Motor neuron (in vitro differentiated cells): ENCODE measurements at regions of chr5 and their contacts with region 1.

Region 1: DNA sequence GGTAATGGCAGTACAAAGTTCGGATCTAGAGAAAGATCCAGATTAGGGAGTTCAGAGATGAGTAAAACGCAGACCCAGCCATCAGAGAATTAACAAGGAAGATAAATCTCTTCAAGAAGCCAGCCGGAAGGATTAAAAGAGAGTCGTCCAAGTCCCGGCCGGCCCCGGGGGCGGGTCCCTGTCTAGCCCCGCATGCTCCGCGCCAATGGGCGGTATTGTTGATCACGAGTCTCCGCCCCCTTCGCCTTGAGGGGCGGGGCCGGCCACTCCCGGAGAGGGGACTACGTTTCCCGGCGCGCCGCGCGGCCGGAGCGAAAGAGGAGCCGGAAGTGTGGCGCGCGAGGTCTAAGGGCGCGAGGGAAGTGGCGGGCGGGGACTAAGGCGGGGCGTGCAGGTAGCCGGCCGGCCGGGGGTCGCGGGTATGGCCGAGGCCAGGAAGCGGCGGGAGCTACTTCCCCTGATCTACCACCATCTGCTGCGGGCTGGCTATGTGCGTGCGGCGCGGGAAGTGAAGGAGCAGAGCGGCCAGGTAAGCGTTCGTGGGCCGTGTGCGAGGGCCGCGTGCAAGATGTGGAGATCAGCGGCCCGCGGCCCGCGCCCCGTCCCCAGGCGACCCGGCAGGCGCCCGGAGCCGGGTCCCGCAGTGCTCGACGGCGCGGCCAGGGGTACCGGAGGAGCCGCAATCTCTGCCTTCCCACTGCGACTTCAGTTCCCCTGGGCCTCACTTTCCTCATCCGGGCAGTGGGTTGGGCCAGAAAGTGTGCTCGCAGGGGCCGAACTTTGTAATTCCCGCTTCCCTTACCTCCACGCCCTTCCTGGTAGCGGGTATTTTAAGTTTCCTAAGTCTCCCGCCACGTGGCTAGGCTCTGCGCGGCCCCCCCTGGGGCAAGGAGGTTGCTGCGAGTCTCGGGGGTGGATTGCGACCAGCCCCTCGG is at the start of gene TCOF1:
- ATAC-seq: peak; percentile 94 to 99 (median 98)
- H3K4me3 ChIP-seq: peak within 1 kb of the TSS; percentile 51 to 76 (median 75)
- H3K27ac ChIP-seq: no peak within 1 kb of the TSS
- H3K4me1 ChIP-seq: peaks cover 12 to 13% of the 10 kb centered on the region in 2 donors
- total RNA-seq, gene TCOF1: 10.9 to 51.4 (median 17.9) TPM

Region 2: DNA sequence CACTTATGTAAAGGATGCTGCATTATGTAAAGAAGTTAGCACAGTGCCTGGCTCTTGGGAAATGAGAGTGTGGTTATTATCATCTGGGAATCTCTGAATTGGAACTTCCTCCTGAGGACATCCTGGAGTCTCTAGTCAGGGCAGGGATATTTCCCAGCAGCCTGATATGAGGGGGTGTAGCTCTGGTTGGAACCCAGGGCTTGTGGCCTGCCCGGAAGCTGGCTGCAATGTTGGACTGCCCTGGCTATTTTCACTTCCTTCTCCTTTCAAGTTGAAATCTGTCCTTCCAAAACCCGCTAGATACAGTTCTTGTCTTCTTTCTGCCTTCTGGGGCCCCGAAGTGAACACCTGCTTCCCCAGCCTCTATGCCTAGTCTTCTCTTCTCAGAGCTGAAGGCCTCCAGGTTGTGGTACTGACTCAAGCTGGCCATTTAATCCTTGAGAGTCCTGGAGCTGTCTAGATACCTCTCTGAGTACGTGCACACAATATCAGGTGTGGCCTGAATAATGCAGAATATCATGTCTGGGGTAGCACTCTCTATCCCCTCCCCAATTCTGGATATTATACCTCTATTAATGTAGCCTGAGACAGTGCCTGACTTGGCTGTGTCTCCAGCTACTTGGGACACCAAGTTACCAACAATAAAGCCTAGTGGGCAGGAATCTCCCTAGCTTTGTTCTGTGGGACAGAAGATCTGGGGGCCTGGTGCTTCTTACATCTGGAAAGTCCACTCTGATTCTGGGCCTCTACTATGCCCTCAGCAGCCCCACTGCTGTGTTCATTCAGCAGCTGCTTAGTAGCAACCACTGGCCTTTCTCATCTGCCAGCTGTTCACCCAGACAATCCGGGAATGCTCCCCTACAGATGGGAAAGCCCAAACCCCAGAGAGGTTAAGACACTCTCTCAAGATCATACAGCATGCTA is 122.8 kb before region 1 on chr5:
- in situ Hi-C with region 1: no loop called
- ATAC-seq: peak in 3 of 8 experiments; percentile 54 to 65 (median 59)
- H3K4me3 ChIP-seq: no peak overlapping the region
- H3K27ac ChIP-seq: peak overlapping the region; percentile 2 to 19
- H3K4me1 ChIP-seq: peaks cover 8 to 9% of the 10 kb centered on the region in 2 donors

Region 3: GRCh38 chr5:150272526-150272925 is 85.1 kb before region 1 on chr5:
- in situ Hi-C with region 1: loop called in 1 of 9 experiments (anchors 25 kb)
- ATAC-seq: peak; percentile 83 to 93 (median 88)
- H3K4me3 ChIP-seq: no peak overlapping the region
- H3K27ac ChIP-seq: no peak overlapping the region
- H3K4me1 ChIP-seq: peaks cover 0 to 2% of the 10 kb centered on the region in 2 donors

Region 4: DNA sequence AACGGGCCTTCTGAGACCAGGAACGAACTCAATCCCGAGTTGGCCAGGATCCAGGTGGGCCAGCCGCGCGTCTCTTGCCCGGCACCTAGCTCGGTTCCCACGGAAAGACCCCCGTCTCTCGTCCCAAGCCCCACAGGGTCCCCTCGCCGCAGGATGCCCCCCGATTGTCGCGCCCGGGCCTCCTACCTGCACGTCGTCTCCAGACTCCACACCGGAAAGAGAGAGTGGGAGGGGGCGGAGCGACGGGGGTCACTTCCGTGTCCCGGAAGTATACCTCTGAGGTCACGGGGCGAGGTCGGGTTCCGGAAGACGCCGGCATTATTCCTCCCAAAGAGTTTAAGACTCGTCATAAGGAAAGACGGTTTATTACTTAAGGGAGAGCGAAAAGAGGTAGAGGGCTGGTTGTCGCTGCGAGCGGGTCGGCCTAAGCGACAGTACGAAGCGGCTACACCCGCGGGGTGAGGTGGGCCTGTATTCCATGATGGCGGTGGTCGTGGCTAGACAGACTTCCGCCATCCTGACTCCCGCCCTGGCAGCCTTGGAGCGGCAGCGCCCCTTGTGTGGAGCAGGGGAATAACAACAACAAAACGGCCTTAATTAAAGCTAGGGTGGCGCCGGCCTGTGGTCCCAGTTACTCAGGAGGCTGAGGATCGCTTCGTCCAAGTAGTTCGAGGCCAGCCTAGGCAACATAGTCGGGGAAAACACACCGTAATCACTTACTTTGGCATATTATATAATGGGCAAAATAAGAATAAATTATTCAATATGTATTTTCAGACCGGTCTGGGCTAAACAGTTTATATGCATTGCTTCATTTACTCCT is 92.1 kb after region 1 on chr5 and contains the start of gene RPS14:
- in situ Hi-C with region 1: no loop called
- ATAC-seq: peak; percentile 94 to 98 (median 96)
- H3K4me3 ChIP-seq: peak within 1 kb of the TSS; percentile 66 to 96 (median 74)
- H3K27ac ChIP-seq: peak within 1 kb of the TSS; percentile 99
- H3K4me1 ChIP-seq: peaks cover 0 to 10% of the 10 kb centered on the region in 2 donors
- total RNA-seq, gene RPS14: 1,897 to 6,053 (median 4,324) TPM